ENCODE measurements at regions of chr2 and their contacts with region 1.

Region 1: DNA sequence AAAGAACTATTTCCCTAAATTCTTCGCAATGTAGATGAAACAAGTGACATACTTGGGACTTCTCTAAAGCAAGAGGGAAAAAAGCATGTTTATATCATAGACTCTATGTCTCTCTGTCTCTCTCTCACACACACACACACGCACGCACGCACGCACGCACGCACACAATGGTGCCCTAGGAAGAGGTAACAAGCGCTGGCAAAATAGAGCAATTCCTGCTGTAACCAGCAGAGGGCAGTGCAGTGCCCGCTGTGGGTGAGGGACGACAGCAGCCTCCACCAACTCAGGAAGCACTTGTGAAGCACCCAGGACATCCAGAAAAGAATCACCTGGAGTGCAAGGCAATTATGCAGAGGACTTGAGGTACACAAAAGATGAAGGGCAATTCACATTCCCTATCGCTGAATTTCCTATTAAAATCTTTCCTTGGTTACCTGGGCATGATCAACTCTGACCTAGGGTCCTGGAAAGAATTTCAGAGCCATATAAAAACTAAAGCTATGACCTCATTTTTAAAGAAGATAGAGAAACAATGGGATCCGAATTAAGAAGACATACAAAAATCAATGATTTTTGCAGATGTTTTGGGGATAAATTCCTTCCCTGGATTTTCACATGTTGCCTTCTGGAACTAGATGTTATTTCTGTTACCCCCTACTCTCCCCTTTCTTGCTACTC is 166.4 kb downstream of the PDE11A start:
- DNase-seq: peak; percentile 68 to 83
- H3K4me3 ChIP-seq: no peak overlapping the region
- H3K4me3 Mint-ChIP-seq: no peak overlapping the region
- H3K27ac Mint-ChIP-seq: no peak overlapping the region
- H3K4me1 ChIP-seq: no peaks in the 10 kb centered on the region
- H3K4me1 Mint-ChIP-seq: peaks cover 8% of the 10 kb centered on the region
- H3K27me3 ChIP-seq: no peaks in the 10 kb centered on the region; the same call in 1 of the 2 replicates
- H3K27me3 Mint-ChIP-seq: peaks cover 4% of the 10 kb centered on the region
- CTCF ChIP-seq: peak; percentile 86 to 94

Region 2: DNA sequence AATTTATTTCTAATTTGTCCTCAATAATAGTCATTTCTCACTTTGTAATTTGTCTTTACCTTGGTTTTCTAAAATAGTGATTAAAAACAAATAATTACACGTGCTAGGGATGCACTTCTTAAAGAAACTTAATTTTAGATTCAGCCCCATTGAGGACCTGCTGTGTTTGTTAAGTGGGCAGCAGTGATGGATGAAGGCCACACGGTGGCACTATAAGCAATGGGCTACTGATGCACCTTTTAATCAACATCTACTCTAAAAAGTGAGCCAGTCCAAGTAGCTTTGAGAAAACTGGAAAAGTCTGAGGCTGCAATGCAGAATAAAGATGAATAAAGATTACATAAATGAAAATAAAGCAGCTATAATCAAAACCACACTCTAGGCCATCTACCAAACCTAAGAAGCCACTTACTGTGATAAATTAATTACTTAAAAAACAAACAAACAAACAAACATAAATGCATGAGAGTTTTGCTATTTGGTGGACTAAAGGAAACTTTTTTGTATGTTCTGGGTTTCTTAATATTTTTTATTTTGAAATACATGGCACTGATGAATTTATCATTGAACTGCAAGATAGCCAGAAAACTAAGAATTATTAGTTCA is 77.1 kb after region 1 on chr2:
- CTCF ChIA-PET with region 1: no interaction called
- POLR2A ChIA-PET with region 1: no interaction called
- intact Hi-C with region 1: loop called (anchors 2 kb)
- DNase-seq: peak; percentile 35 to 48
- H3K4me3 ChIP-seq: no peak overlapping the region
- H3K4me3 Mint-ChIP-seq: no peak overlapping the region
- H3K27ac Mint-ChIP-seq: no peak overlapping the region
- H3K4me1 ChIP-seq: no peaks in the 10 kb centered on the region
- H3K4me1 Mint-ChIP-seq: no peaks in the 10 kb centered on the region
- H3K27me3 ChIP-seq: no peaks in the 10 kb centered on the region; the same call in 1 of the 2 replicates
- H3K27me3 Mint-ChIP-seq: peaks cover 6% of the 10 kb centered on the region
- CTCF ChIP-seq: peak; percentile 79 to 86